ENCODE measurements at regions of chr2 and their contacts with region 1.

Region 1: GRCh38 chr2:207632575-207633493 is 7.6 kb upstream of the METTL21A start:
- DNase-seq: no peak
- H3K4me3 Mint-ChIP-seq: no peak overlapping the region
- H3K27ac Mint-ChIP-seq: peak overlapping the region; percentile 18
- H3K4me1 Mint-ChIP-seq: peaks cover 11% of the 10 kb centered on the region
- H3K27me3 Mint-ChIP-seq: peaks cover 6% of the 10 kb centered on the region

Region 2: DNA sequence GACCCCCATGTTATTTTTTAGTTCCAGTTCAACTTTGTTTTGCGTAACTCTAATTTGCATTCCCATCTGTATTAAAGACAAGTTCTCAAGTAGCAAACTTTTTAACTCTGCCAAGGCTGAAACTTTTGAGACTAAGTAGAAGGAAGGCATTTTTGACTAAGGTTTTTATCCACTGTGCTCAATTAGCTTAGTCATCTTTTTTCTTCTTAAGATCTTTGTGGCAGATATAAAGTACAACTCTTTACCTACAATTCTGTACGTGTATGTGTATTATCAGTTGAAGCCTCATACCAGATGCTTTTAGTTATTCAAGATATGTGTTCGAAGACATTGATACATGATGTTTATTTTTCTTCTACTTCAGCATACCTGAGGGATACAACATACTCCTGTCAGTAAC is 61.5 kb before region 1 on chr2:
- intact Hi-C with region 1: no loop called
- DNase-seq: no peak
- H3K4me3 Mint-ChIP-seq: no peak overlapping the region
- H3K27ac Mint-ChIP-seq: peak overlapping the region; percentile 46
- H3K4me1 Mint-ChIP-seq: peaks cover 20% of the 10 kb centered on the region
- H3K27me3 Mint-ChIP-seq: no peaks in the 10 kb centered on the region

Region 3: DNA sequence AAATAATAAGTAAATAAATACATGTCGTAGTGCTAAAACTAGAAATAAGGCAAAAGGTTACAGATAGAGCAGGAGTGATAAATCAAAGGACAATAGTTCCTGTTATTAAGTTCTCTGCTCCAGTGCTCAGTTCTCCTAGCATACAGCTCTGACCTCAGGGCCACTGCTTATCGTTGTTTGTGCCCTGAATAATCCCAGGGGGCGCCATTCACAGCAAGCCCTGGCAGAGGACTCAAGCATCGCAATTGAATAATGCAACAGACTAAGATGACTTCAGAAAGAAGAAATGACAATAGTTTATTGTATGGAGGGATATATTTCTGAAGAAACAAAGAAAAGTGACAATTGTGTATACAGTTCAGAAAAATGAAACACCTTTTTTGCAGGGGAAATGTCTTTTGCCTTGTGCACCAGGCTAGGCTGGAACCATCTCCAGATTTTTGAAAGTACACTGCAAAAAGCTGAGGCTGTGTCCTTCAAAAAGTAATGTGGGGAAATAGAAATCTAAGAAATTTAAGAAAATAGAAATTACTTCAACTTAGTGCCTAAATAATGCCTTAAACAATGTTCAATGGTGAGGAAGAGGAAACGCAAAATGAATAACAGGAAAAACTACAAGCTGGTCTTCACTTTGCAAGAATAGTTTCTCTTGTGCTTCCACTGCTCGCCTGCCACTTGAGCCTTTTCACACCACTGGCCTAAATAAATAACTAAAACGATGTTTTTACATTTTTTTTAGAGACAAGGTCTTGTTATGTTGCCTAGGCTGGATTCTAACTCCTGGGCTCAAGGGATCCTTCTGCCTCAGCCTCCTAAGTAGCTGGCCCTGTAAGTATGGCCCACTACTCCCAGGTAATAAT is 59.6 kb after region 1 on chr2:
- intact Hi-C with region 1: loop called (anchors 5 kb)
- DNase-seq: no peak
- H3K4me3 Mint-ChIP-seq: no peak overlapping the region
- H3K27ac Mint-ChIP-seq: no peak overlapping the region
- H3K4me1 Mint-ChIP-seq: peaks cover 9% of the 10 kb centered on the region
- H3K27me3 Mint-ChIP-seq: no peaks in the 10 kb centered on the region

Measured in activated T-helper 2 cell treated with anti-CD3 and anti-CD28 coated beads, Interferon-gamma antibody, Interleukin-2, Interleukin-4, amounts not matched to agents 10 μg/mL and 5 μg/mL and 100 μg/mL, durations not matched to agents 14 hours and 24 hours and 36 hours (primary cell).